ENCODE measurements at regions of chr4 and their contacts with region 1.

Region 1: GRCh38 chr4:25376754-25377571 is at the start of gene ANAPC4:
- DNase-seq: peak; percentile 95 to 100 (median 98)
- ATAC-seq: peak; percentile 95
- H3K4me3 ChIP-seq: peak within 1 kb of the TSS; percentile 89 to 96
- H3K4me3 Mint-ChIP-seq: no peak within 1 kb of the TSS
- H3K27ac ChIP-seq: peak within 1 kb of the TSS; percentile 60 to 64
- H3K27ac Mint-ChIP-seq: peak within 1 kb of the TSS; percentile 90
- H3K4me1 ChIP-seq: peaks cover 21% of the 10 kb centered on the region
- H3K4me1 Mint-ChIP-seq: peaks cover 16% of the 10 kb centered on the region
- H3K27me3 ChIP-seq: no peaks in the 10 kb centered on the region
- H3K27me3 Mint-ChIP-seq: no peaks in the 10 kb centered on the region
- CTCF ChIP-seq: no peak
- total RNA-seq, gene ANAPC4: 28.0 to 30.5 TPM

Region 2: GRCh38 chr4:24584175-24584850 is 792.6 kb before region 1 on chr4 and contains the start of gene DHX15:
- CTCF ChIA-PET with region 1: no interaction called
- POLR2A ChIA-PET with region 1: no interaction called
- intact Hi-C with region 1: loop called in 1 of 2 experiments (anchors 1 kb)
- DNase-seq: peak; percentile 81 to 98 (median 91)
- ATAC-seq: peak; percentile 94
- H3K4me3 ChIP-seq: peak within 1 kb of the TSS; percentile 81 to 97
- H3K4me3 Mint-ChIP-seq: peak within 1 kb of the TSS; percentile 98
- H3K27ac ChIP-seq: peak within 1 kb of the TSS; percentile 90 to 98
- H3K27ac Mint-ChIP-seq: peak within 1 kb of the TSS; percentile 98
- H3K4me1 ChIP-seq: peaks cover 18% of the 10 kb centered on the region
- H3K4me1 Mint-ChIP-seq: peaks cover 43% of the 10 kb centered on the region
- H3K27me3 ChIP-seq: no peaks in the 10 kb centered on the region
- H3K27me3 Mint-ChIP-seq: no peaks in the 10 kb centered on the region
- CTCF ChIP-seq: no peak
- total RNA-seq, gene DHX15: 211 to 221 TPM

Region 3: DNA sequence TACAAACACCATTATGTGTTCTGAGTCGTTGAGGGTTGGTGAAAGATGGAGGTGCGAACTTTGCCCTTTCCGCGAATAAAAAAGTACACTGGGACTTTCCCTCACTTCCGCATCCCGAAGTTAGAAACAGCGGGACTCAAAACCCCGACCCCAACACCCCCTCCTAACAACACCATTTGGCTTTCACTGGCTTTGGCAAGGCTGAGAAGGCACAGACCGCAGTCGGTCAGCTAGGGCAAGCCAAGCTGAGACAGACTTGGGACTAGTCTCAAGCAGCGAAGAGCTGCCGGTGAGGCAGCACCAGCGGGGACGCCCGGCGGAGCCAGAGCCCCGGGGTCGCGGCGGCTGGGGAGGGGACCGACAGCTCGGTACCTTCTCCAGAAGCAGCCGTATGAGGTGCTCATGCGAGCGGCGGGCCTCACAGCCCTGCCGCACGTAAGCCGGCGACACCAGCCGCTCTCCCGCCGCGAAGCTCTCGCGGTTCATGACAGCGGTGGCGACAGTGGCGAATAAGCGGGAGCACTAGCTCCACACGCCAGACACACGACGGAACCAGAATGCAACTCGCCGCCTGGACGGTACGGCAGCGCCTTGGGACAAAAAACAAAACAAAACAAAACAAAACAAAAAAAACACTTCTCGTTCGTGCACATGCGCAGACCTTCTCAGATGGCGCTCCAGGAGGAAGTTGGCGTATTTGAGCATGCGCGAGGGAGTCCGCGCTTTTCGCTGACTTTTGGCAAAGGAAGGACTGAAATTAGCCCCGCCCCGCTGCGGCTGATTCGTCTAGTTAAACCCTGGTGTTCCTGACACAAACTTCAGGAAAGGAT is 216.9 kb before region 1 on chr4 and contains the start of gene SEPSECS:
- CTCF ChIA-PET with region 1: no interaction called
- POLR2A ChIA-PET with region 1: interaction called, 3 read pairs
- intact Hi-C with region 1: loop called (anchors 1 kb)
- DNase-seq: peak; percentile 82 to 99 (median 94)
- ATAC-seq: peak; percentile 79
- H3K4me3 ChIP-seq: peak within 1 kb of the TSS; percentile 60 to 79
- H3K4me3 Mint-ChIP-seq: peak within 1 kb of the TSS; percentile 91
- H3K27ac ChIP-seq: peak within 1 kb of the TSS; percentile 97 to 98
- H3K27ac Mint-ChIP-seq: peak within 1 kb of the TSS; percentile 94
- H3K4me1 ChIP-seq: peaks cover 18% of the 10 kb centered on the region
- H3K4me1 Mint-ChIP-seq: peaks cover 52% of the 10 kb centered on the region
- H3K27me3 ChIP-seq: no peaks in the 10 kb centered on the region
- H3K27me3 Mint-ChIP-seq: no peaks in the 10 kb centered on the region
- CTCF ChIP-seq: no peak
- total RNA-seq, gene SEPSECS: 12.5 to 13.4 TPM

Region 4: DNA sequence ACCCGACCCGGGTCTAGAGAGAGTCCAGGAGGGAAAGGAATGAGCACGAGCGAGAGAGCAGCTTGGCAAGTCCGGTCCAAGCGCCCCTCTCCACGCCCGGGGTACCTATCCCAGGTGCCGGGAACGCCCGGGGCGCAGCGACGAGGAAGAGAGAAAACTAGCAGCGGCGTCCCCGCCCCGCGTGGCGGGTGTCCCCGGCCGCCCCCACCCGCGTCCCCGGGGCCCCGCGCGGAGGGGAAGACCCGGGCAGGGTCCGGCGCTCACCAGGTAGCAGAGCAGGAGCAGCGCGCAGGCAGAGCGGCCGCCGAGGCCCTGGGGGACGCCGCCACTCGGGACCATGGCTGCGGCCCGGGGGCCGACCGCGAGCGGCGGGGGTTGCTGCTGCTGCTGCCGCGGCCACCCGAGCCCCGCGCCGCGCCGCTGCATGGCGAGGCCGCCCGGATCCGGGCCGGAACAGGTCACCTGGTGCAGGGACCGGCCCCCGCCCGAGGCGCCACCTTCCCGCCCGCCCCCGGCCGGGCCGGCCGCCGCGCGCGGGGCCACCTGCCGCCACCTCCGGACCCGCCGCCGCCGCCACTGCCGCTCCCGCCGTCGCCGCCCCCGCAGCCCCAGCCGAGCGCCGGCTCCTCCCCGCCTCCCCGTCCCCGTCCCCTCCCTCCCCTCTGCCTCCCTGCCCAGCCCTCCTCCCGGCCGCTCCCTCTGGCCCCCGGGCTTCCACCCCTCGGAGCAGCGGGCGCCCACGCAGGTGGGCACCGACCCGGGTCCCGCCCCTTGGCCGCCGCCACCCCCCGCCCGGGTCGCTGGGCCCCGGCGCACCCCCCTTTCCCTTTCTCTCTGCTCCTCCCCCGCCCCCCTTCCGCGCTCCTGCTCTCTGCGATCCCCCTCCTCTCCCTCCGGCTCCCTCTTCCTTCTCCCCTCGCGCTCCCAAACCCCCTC is 485.7 kb after region 1 on chr4 and contains the start of gene SEL1L3:
- CTCF ChIA-PET with region 1: no interaction called
- POLR2A ChIA-PET with region 1: no interaction called
- intact Hi-C with region 1: loop called (anchors 5 kb)
- DNase-seq: peak in 8 of 9 experiments; percentile 34 to 71 (median 51)
- ATAC-seq: peak; percentile 37
- H3K4me3 ChIP-seq: peak within 1 kb of the TSS; percentile 71 to 72
- H3K4me3 Mint-ChIP-seq: peak within 1 kb of the TSS; percentile 100
- H3K27ac ChIP-seq: peak within 1 kb of the TSS; percentile 54 to 80
- H3K27ac Mint-ChIP-seq: peak within 1 kb of the TSS; percentile 91
- H3K4me1 ChIP-seq: peaks cover 40% of the 10 kb centered on the region
- H3K4me1 Mint-ChIP-seq: peaks cover 41% of the 10 kb centered on the region
- H3K27me3 ChIP-seq: no peaks in the 10 kb centered on the region
- H3K27me3 Mint-ChIP-seq: no peaks in the 10 kb centered on the region
- CTCF ChIP-seq: no peak
- total RNA-seq, gene SEL1L3: 31.2 to 33.7 TPM

Region 5: GRCh38 chr4:25913851-25914669 is 537.1 kb after region 1 on chr4 and contains the start of gene SMIM20:
- CTCF ChIA-PET with region 1: no interaction called
- POLR2A ChIA-PET with region 1: no interaction called
- intact Hi-C with region 1: loop called in 1 of 2 experiments (anchors 5 kb)
- DNase-seq: peak; percentile 81 to 95 (median 87)
- ATAC-seq: peak; percentile 94
- H3K4me3 ChIP-seq: peak within 1 kb of the TSS; percentile 72 to 78
- H3K4me3 Mint-ChIP-seq: peak within 1 kb of the TSS; percentile 97
- H3K27ac ChIP-seq: peak within 1 kb of the TSS; percentile 81 to 95
- H3K27ac Mint-ChIP-seq: peak within 1 kb of the TSS; percentile 98
- H3K4me1 ChIP-seq: peaks cover 18% of the 10 kb centered on the region
- H3K4me1 Mint-ChIP-seq: peaks cover 24% of the 10 kb centered on the region
- H3K27me3 ChIP-seq: no peaks in the 10 kb centered on the region
- H3K27me3 Mint-ChIP-seq: no peaks in the 10 kb centered on the region
- CTCF ChIP-seq: no peak
- total RNA-seq, gene SMIM20: 7.5 to 9.8 TPM

Region 6: DNA sequence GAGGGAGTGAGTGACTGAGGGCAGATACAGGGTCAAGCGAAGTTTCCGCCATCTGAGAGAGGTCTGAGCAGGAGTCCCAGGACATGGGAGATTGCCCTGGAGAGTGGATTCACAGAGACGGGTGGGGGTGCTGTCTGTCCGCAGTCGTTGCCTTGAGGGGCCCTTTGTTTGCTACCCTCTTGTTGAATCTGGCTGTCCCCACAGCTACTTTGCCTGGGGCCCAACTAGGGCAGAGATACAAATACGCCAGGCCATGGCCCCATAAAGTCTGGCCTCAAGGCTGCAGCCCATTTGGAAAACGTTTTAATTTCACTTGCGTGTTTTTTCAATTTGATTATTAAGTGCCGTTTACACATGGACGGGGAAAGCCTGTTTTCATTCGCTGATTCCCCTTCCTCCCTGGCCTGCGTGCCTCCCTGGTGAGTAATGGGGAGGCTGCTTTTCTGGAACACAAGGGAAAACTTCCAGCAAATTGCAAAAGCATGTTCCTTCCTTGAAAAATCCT is 671.5 kb after region 1 on chr4:
- CTCF ChIA-PET with region 1: no interaction called
- POLR2A ChIA-PET with region 1: no interaction called
- intact Hi-C with region 1: no loop called
- DNase-seq: no peak
- ATAC-seq: no peak
- H3K4me3 ChIP-seq: no peak overlapping the region
- H3K4me3 Mint-ChIP-seq: no peak overlapping the region
- H3K27ac ChIP-seq: no peak overlapping the region
- H3K27ac Mint-ChIP-seq: no peak overlapping the region
- H3K4me1 ChIP-seq: no peaks in the 10 kb centered on the region
- H3K4me1 Mint-ChIP-seq: no peaks in the 10 kb centered on the region
- H3K27me3 ChIP-seq: no peaks in the 10 kb centered on the region
- H3K27me3 Mint-ChIP-seq: peaks cover 14% of the 10 kb centered on the region
- CTCF ChIP-seq: no peak

Region 7: GRCh38 chr4:26589705-26590104 is 1212.7 kb after region 1 on chr4:
- CTCF ChIA-PET with region 1: no interaction called
- POLR2A ChIA-PET with region 1: no interaction called
- intact Hi-C with region 1: loop called (anchors 5 kb)
- DNase-seq: no peak
- ATAC-seq: no peak
- H3K4me3 ChIP-seq: no peak overlapping the region
- H3K4me3 Mint-ChIP-seq: no peak overlapping the region
- H3K27ac ChIP-seq: no peak overlapping the region
- H3K27ac Mint-ChIP-seq: no peak overlapping the region
- H3K4me1 ChIP-seq: peaks cover 2% of the 10 kb centered on the region
- H3K4me1 Mint-ChIP-seq: peaks cover 13% of the 10 kb centered on the region
- H3K27me3 ChIP-seq: no peaks in the 10 kb centered on the region
- H3K27me3 Mint-ChIP-seq: no peaks in the 10 kb centered on the region
- CTCF ChIP-seq: no peak

Measured in CD8-positive, alpha-beta T cell (primary cell).